ENCODE measurements at regions of chr10 and their contacts with region 1.

Region 1: DNA sequence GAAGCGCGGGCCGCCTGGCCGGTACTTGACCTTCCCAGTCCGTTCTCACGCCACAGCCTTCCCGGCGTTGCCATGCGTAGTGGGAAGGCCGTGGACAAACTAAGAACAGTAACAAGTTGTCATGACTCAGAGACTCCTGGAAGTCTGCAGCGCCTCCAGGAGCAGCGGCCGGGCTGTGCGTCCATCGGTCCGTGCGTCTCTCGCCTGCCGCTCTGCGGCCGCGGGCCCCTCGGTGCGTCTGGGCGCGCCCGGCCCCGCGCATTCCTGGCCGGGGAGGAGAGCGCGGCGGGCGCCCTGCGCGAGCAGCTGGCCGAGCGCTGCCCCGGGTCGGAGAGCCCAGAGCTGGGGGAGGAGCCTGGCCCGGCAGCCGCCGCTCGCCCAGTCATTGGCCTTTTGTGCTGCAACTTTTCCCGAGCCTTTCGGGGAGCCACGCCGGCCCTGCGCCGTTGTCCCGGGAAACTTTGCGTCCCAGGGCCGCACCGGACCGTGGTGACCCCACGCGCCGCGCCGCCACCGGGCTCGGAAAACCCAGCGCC is 123.7 kb downstream of the TACC2 start:
- DNase-seq: peak; percentile 88 to 90
- H3K4me3 ChIP-seq: peak overlapping the region; percentile 64 to 82
- H3K27ac ChIP-seq: peak overlapping the region; percentile 98 to 99
- H3K4me1 ChIP-seq: peaks cover 6 to 7% of the 10 kb centered on the region in 2 donors
- H3K27me3 ChIP-seq: no peaks in the 10 kb centered on the region
- CTCF ChIP-seq: peak; percentile 36 to 95 (median 73)
- POLR2A ChIP-seq: peak; percentile 49 to 83

Region 2: GRCh38 chr10:122051251-122051996 is 61.3 kb before region 1 on chr10:
- intact Hi-C with region 1: loop called (anchors 5 kb)
- DNase-seq: peak; percentile 25 to 56
- H3K4me3 ChIP-seq: no peak overlapping the region
- H3K27ac ChIP-seq: no peak overlapping the region
- H3K4me1 ChIP-seq: no peaks in the 10 kb centered on the region
- H3K27me3 ChIP-seq: no peaks in the 10 kb centered on the region
- CTCF ChIP-seq: peak; percentile 27 to 54 (median 38)
- POLR2A ChIP-seq: no peak

Measured in uterus (tissue), 4 donors.